ENCODE measurements at regions of chr15 and their contacts with region 1.

Region 1: GRCh38 chr15:50051803-50052419 is 67.1 kb downstream of the ATP8B4 start:
- DNase-seq: no peak
- ATAC-seq: peak; percentile 44
- H3K4me3 ChIP-seq: no peak overlapping the region
- H3K27ac ChIP-seq: no peak overlapping the region
- H3K4me1 ChIP-seq: no peaks in the 10 kb centered on the region
- H3K27me3 ChIP-seq: no peaks in the 10 kb centered on the region
- CTCF ChIP-seq: peak; percentile 44 to 51 (median 50)
- EP300 ChIP-seq: no peak
- POLR2A ChIP-seq: no peak
- RAD21 ChIP-seq: peak; percentile 56

Region 2: DNA sequence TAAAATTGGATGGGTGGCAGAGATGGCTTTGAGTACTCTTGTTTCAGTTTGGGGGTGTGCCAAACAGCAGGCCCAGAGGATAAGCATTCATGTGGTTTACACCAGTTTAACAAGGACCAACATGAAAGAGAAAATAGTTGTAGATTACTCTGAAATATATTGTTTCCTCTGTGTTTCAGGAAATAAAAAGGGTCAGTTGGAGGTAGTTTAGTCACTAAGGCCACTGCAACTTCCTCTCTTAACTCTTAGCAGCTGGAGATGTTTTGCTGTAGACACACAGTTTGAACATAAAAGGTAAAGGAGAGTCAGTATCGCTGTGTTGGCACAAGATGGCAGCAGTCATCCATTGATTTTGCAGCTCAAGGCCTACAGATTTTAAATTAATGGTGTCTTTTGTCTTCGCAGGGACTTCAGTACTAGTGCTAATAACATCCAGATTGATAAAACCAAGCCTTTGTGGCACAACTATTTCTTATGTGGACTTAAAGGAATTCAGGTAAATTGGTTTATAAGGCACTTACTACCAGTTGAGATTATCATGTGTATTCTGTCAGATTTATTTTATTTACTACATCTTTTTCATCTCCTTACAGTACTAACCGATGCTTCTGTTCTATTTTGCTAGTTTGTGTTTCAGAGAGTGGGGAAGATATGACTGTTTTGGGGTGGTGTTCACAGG is 816.3 kb before region 1 on chr15:
- CTCF ChIA-PET with region 1: interaction called, 37 read pairs
- POLR2A ChIA-PET with region 1: no interaction called
- RAD21 ChIA-PET with region 1: interaction called, 11 read pairs
- SMC1A ChIA-PET with region 1: interaction called, 21 read pairs
- in situ Hi-C with region 1: loop called (anchors 10 kb)
- intact Hi-C with region 1: no loop called
- DNase-seq: peak; percentile 56
- ATAC-seq: peak; percentile 95
- H3K4me3 ChIP-seq: no peak overlapping the region
- H3K27ac ChIP-seq: no peak overlapping the region
- H3K4me1 ChIP-seq: peaks cover 7% of the 10 kb centered on the region; the same call in 1 of the 2 replicates
- H3K27me3 ChIP-seq: no peaks in the 10 kb centered on the region
- CTCF ChIP-seq: peak; percentile 68 to 85 (median 82)
- EP300 ChIP-seq: no peak
- POLR2A ChIP-seq: no peak
- RAD21 ChIP-seq: peak; percentile 84

Region 3: GRCh38 chr15:49421991-49422390 is 629.9 kb before region 1 on chr15:
- CTCF ChIA-PET with region 1: interaction called, 22 read pairs
- POLR2A ChIA-PET with region 1: no interaction called
- RAD21 ChIA-PET with region 1: interaction called, 6 read pairs
- SMC1A ChIA-PET with region 1: interaction called, 13 read pairs
- in situ Hi-C with region 1: no loop called
- intact Hi-C with region 1: no loop called
- DNase-seq: peak; percentile 12
- ATAC-seq: peak; percentile 72
- H3K4me3 ChIP-seq: no peak overlapping the region
- H3K27ac ChIP-seq: no peak overlapping the region
- H3K4me1 ChIP-seq: no peaks in the 10 kb centered on the region
- H3K27me3 ChIP-seq: no peaks in the 10 kb centered on the region
- CTCF ChIP-seq: peak; percentile 57 to 78 (median 66)
- EP300 ChIP-seq: no peak
- POLR2A ChIP-seq: no peak
- RAD21 ChIP-seq: peak; percentile 80

Region 4: GRCh38 chr15:49876401-49877038 is 175.4 kb before region 1 on chr15:
- CTCF ChIA-PET with region 1: interaction called, 29 read pairs
- POLR2A ChIA-PET with region 1: no interaction called
- RAD21 ChIA-PET with region 1: interaction called, 10 read pairs
- SMC1A ChIA-PET with region 1: interaction called, 52 read pairs
- in situ Hi-C with region 1: no loop called
- intact Hi-C with region 1: no loop called
- DNase-seq: no peak
- ATAC-seq: no peak
- H3K4me3 ChIP-seq: no peak overlapping the region
- H3K27ac ChIP-seq: no peak overlapping the region
- H3K4me1 ChIP-seq: no peaks in the 10 kb centered on the region
- H3K27me3 ChIP-seq: no peaks in the 10 kb centered on the region
- CTCF ChIP-seq: peak; percentile 28 to 39 (median 37); a peak in 4 of 6 replicates
- EP300 ChIP-seq: no peak
- POLR2A ChIP-seq: no peak
- RAD21 ChIP-seq: peak; percentile 58

Region 5: GRCh38 chr15:50145451-50145872 is 93.6 kb after region 1 on chr15:
- CTCF ChIA-PET with region 1: interaction called, 6 read pairs
- POLR2A ChIA-PET with region 1: interaction called, 8 read pairs
- RAD21 ChIA-PET with region 1: interaction called, 3 read pairs
- SMC1A ChIA-PET with region 1: interaction called, 9 read pairs
- in situ Hi-C with region 1: no loop called
- intact Hi-C with region 1: loop called (anchors 5 kb)
- DNase-seq: peak; percentile 16
- ATAC-seq: peak; percentile 75
- H3K4me3 ChIP-seq: no peak overlapping the region
- H3K27ac ChIP-seq: no peak overlapping the region
- H3K4me1 ChIP-seq: no peaks in the 10 kb centered on the region
- H3K27me3 ChIP-seq: no peaks in the 10 kb centered on the region; a peak in 1 of 4 replicates
- CTCF ChIP-seq: peak; percentile 25 to 47 (median 31); a peak in 4 of 6 replicates
- EP300 ChIP-seq: no peak
- POLR2A ChIP-seq: no peak
- RAD21 ChIP-seq: peak; percentile 66